ENCODE measurements at regions of chr9 and their contacts with region 1.

Region 1: DNA sequence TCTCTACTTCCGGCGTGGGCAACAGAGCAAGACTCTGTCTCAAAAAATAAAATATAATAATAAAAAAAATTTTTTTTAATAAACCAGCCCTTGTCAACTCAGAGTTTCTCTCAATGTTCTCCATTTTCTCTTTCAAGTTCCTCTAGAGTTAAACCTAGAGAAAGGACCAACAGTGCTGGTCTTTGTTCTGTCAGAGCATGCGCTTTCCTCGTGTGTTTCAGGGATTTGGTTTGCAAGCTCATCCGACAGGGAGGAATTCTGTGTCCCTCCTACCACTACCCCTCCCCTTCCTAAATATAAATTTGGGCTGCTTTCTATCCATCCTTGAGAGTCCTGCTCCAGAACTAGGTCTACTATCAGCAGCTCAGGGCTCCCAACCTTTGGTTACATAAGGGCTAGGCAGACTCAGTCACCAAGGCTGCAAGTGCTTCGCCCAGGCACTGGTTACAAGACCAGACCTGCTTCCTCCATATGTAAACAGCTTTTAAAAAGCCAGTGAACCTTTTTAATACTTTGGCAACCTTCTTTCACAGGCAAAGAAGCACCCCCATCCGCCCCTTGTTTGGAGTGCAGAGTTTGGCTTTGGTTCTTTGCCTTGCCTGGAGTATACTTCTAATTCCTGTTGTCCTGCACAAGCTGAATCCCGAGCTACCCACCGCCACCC is 13.5 kb downstream of the SETX start:
- DNase-seq: peak; percentile 79 to 82
- H3K4me3 ChIP-seq: no peak overlapping the region
- H3K27ac ChIP-seq: peak overlapping the region; percentile 55 to 83 (median 77)
- H3K4me1 ChIP-seq: peaks cover 12 to 25% of the 10 kb centered on the region in 2 donors
- H3K27me3 ChIP-seq: no peaks in the 10 kb centered on the region
- CTCF ChIP-seq: no peak
- POLR2A ChIP-seq: no peak

Region 2: GRCh38 chr9:132274861-132275260 is 66.4 kb before region 1 on chr9:
- intact Hi-C with region 1: loop called (anchors 10 kb)
- DNase-seq: no peak
- H3K4me3 ChIP-seq: no peak overlapping the region
- H3K27ac ChIP-seq: no peak overlapping the region
- H3K4me1 ChIP-seq: no peaks in the 10 kb centered on the region
- H3K27me3 ChIP-seq: no peaks in the 10 kb centered on the region
- CTCF ChIP-seq: no peak
- POLR2A ChIP-seq: no peak

Region 3: DNA sequence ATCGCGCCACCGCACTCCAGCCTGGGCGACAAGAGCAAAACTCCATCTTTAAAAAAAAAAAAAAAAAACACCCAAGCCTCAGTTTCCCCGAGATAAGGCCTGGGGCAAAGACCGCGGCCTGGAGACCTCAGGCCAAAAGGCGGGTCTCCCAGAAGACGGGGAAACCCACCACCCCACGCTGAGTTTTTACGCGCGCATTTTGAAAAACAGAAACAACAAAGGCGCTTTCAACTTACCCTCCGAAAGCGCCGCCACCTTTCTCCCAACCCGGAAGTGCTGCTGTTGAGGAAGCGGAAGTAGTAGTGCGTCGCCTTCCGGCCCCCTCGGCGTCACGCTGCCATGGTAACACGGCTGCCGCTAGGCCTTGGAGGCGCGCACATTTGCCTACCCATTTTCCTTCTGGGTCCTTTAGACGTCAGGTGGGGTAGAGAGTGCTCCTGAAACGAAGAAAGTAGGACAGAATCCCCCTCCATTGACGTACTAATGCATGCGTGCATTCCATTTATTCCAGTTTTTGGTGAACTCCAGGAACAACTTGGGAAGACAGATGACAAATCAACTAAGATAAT is 65.3 kb after region 1 on chr9 and contains the start of gene TTF1:
- intact Hi-C with region 1: no loop called
- DNase-seq: peak; percentile 88 to 91
- H3K4me3 ChIP-seq: peak within 1 kb of the TSS; percentile 55 to 97 (median 67)
- H3K27ac ChIP-seq: no peak within 1 kb of the TSS
- H3K4me1 ChIP-seq: peaks cover 27 to 36% of the 10 kb centered on the region in 2 donors
- H3K27me3 ChIP-seq: peaks cover under 1% of the 10 kb centered on the region
- CTCF ChIP-seq: no peak
- POLR2A ChIP-seq: peak in 1 of 2 donors; percentile 49
- total RNA-seq, gene TTF1: 10.8 to 19.3 (median 13.6) TPM